Brain microvascular endothelial cell (primary cell): ENCODE measurements at regions of chr20 and their contacts with region 1.

Region 1: GRCh38 chr20:51595058-51595532 is 52.6 kb upstream of the NFATC2 start:
- DNase-seq: peak; percentile 88
- H3K4me3 ChIP-seq: no peak overlapping the region
- H3K27ac ChIP-seq: peak overlapping the region; percentile 54
- H3K27me3 ChIP-seq: no peaks in the 10 kb centered on the region
- CTCF ChIP-seq: peak; percentile 95

Region 2: GRCh38 chr20:51385646-51386530 is 209.2 kb before region 1 on chr20:
- in situ Hi-C with region 1: loop called (anchors 10 kb)
- DNase-seq: peak; percentile 38
- H3K4me3 ChIP-seq: no peak overlapping the region
- H3K27ac ChIP-seq: no peak overlapping the region
- H3K27me3 ChIP-seq: no peaks in the 10 kb centered on the region
- CTCF ChIP-seq: peak; percentile 83